ENCODE measurements at regions of chr16 and their contacts with region 1.

Region 1: DNA sequence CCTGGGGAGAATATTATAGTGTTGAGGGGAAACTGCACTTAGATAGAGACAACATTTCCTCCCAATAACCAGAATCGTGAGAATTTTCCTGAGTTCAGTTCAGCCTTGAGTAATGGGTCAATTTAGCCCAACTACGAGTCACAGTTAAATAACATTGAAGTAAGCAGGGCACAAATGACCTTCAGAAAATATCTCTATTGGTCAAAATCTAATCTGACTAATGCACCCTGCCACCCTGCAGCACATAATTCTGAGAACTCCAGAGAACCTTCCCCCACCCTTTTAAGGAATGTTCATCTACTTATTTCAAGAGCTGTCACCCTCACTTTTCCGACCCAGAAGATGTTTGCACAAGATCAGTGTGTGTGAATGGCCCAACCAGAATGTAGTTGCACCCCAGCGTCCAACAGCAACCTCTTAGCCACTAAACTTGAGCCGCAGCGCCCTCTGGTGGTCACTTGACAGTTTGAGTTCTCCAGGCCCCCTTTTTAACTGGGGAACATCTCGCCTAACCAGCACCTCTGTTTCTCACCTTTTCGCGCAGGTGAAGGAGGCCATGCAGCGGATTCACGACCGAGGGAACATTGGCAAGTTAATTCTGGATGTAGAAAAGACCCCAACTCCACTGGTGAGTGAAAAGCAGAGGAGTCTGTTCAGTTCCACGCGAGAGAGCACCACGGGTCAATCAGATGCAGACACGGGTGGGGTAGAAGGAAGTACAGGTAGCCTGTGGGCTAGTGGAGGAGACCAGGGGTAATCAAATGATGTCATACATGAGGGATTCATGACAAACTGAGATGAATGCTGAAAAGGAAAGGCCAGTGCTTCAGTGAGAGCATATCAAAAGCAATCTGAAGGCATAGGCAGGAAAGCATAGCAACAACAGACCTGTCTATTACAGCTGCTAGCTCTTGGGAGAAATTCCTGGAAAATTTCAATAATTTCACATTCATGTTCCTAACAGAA is 50.8 kb upstream of the CLEC3A start:
- DNase-seq: peak; percentile 81
- H3K4me3 ChIP-seq: no peak overlapping the region
- H3K27ac ChIP-seq: no peak overlapping the region
- H3K4me1 ChIP-seq: no peaks in the 10 kb centered on the region
- H3K27me3 ChIP-seq: no peaks in the 10 kb centered on the region
- CTCF ChIP-seq: peak; percentile 78 to 85 (median 80)
- EP300 ChIP-seq: no peak
- POLR2A ChIP-seq: no peak

Region 2: DNA sequence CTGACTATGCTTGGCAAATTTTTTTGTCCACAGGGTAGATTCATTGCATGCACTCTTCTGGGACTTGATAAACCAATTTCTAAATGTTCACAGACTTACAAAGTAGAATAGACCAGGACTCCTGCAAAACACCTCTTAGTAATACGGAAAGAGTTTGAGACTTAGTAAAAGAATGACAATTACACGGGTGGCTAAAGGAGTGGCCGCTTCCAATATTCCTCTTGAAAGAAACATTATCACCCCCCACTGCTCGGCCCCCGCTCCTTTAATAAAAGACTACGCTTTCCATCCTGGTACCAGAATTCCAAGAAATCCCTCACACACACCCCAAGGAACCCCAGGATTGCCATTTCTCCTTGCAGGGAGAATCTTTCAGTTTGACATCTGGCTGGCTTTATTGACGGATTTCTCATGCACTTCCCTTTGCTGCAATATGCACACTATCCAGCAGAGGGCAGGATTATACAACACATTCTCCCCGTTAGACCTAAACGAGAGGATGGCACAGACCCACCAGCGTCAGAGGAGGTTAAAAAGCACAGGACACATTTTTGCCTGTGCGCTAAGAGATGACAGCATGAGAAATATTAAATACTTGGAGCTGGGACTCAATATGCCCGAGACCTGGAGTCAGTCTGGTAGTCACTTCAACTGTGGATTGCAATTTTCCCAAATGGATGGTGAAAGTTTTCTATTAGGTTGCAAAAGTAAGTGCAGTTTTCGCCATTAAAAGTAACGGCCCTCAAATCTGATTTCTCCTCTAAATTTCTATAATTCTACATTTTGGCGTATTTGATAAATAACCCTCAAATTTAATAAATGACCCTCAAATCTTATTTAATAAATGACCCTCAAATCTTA is 295.9 kb before region 1 on chr16:
- in situ Hi-C with region 1: loop called (anchors 5 to 10 kb)
- intact Hi-C with region 1: loop called (anchors 2 kb)
- DNase-seq: peak; percentile 71
- H3K4me3 ChIP-seq: no peak overlapping the region
- H3K27ac ChIP-seq: no peak overlapping the region
- H3K4me1 ChIP-seq: peaks cover 0 to 5% (median 0%) of the 10 kb centered on the region in 4 donors
- H3K27me3 ChIP-seq: peaks cover 4% of the 10 kb centered on the region
- CTCF ChIP-seq: peak; percentile 88 to 94 (median 89)
- EP300 ChIP-seq: no peak
- POLR2A ChIP-seq: no peak

Measured in transverse colon (tissue), 4 donors.